T-cell (primary cell): ENCODE measurements at regions of chr5 and their contacts with region 1.

Region 1: GRCh38 chr5:59487772-59488729 is 405.5 kb downstream of the PDE4D start:
- DNase-seq: no peak
- ATAC-seq: no peak
- H3K4me3 ChIP-seq: no peak overlapping the region
- H3K4me3 Mint-ChIP-seq: no peak overlapping the region
- H3K27ac ChIP-seq: no peak overlapping the region
- H3K27ac Mint-ChIP-seq: no peak overlapping the region
- H3K4me1 ChIP-seq: no peaks in the 10 kb centered on the region
- H3K4me1 Mint-ChIP-seq: no peaks in the 10 kb centered on the region
- H3K27me3 ChIP-seq: no peaks in the 10 kb centered on the region
- H3K27me3 Mint-ChIP-seq: no peaks in the 10 kb centered on the region

Region 2: GRCh38 chr5:59436364-59437148 is 51.5 kb before region 1 on chr5:
- CTCF ChIA-PET with region 1: no interaction called
- POLR2A ChIA-PET with region 1: no interaction called
- DNase-seq: no peak
- ATAC-seq: no peak
- H3K4me3 ChIP-seq: no peak overlapping the region
- H3K4me3 Mint-ChIP-seq: no peak overlapping the region
- H3K27ac ChIP-seq: no peak overlapping the region
- H3K27ac Mint-ChIP-seq: no peak overlapping the region
- H3K4me1 ChIP-seq: no peaks in the 10 kb centered on the region
- H3K4me1 Mint-ChIP-seq: no peaks in the 10 kb centered on the region
- H3K27me3 ChIP-seq: no peaks in the 10 kb centered on the region
- H3K27me3 Mint-ChIP-seq: peaks cover 5 to 8% of the 10 kb centered on the region in 2 donors

Region 3: DNA sequence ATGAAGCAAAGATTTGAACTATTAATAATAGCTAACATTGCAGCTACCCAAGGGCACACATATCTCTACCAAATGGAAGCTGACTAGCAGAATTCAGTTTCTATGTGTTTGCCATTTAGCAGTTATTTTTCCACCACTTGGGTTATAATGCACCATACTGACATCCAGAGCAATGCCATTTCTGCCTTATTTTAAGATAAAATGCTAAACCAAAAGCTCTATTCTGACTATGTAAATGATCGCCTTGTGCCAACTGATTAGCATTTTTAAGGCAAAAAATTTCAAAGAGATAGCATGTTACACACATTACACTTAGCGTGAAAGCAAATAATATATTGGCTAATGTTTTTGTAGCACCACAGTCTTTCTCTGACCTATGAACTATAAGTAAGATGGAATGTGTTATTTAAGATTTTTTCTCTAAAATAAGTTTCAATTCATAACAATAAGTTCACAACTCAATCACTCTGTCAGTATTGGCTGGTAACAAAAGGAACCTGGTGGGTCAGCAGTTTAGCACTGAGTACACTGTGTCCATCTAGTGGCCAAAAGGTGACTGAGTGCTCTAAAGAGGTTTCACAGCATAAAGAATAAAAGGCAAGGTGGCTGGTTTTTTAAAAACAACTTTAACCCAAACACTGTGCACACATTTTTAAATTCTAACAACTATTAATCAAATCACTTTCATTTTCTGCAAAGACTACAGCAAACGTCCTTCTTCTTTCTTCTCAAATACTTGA is 38.0 kb before region 1 on chr5:
- CTCF ChIA-PET with region 1: no interaction called
- POLR2A ChIA-PET with region 1: no interaction called
- DNase-seq: no peak
- ATAC-seq: no peak
- H3K4me3 ChIP-seq: no peak overlapping the region
- H3K4me3 Mint-ChIP-seq: no peak overlapping the region
- H3K27ac ChIP-seq: no peak overlapping the region
- H3K27ac Mint-ChIP-seq: no peak overlapping the region
- H3K4me1 ChIP-seq: no peaks in the 10 kb centered on the region
- H3K4me1 Mint-ChIP-seq: no peaks in the 10 kb centered on the region
- H3K27me3 ChIP-seq: no peaks in the 10 kb centered on the region
- H3K27me3 Mint-ChIP-seq: no peaks in the 10 kb centered on the region

Region 4: GRCh38 chr5:59503220-59503619 is 15.2 kb after region 1 on chr5:
- CTCF ChIA-PET with region 1: no interaction called
- POLR2A ChIA-PET with region 1: interaction called in 1 of 2 experiments, 13 read pairs
- DNase-seq: no peak
- ATAC-seq: no peak
- H3K4me3 ChIP-seq: no peak overlapping the region
- H3K4me3 Mint-ChIP-seq: no peak overlapping the region
- H3K27ac ChIP-seq: no peak overlapping the region
- H3K27ac Mint-ChIP-seq: no peak overlapping the region
- H3K4me1 ChIP-seq: no peaks in the 10 kb centered on the region
- H3K4me1 Mint-ChIP-seq: no peaks in the 10 kb centered on the region
- H3K27me3 ChIP-seq: no peaks in the 10 kb centered on the region
- H3K27me3 Mint-ChIP-seq: no peaks in the 10 kb centered on the region

Region 5: GRCh38 chr5:60738461-60738860 is 1250.4 kb after region 1 on chr5:
- CTCF ChIA-PET with region 1: no interaction called
- POLR2A ChIA-PET with region 1: no interaction called
- DNase-seq: no peak
- ATAC-seq: no peak
- H3K4me3 ChIP-seq: no peak overlapping the region
- H3K4me3 Mint-ChIP-seq: no peak overlapping the region
- H3K27ac ChIP-seq: no peak overlapping the region
- H3K27ac Mint-ChIP-seq: no peak overlapping the region
- H3K4me1 ChIP-seq: no peaks in the 10 kb centered on the region
- H3K4me1 Mint-ChIP-seq: no peaks in the 10 kb centered on the region
- H3K27me3 ChIP-seq: peaks cover 0 to 12% of the 10 kb centered on the region in 2 experiments
- H3K27me3 Mint-ChIP-seq: peaks cover 2 to 6% of the 10 kb centered on the region in 2 donors